BJ (cell line): ENCODE measurements at regions of chr16 and their contacts with region 1.

Region 1: GRCh38 chr16:88785106-88785924 is at the start of gene PIEZO1:
- DNase-seq: no peak
- H3K4me3 ChIP-seq: peak within 1 kb of the TSS; percentile 62
- H3K27me3 ChIP-seq: no peaks in the 10 kb centered on the region
- CTCF ChIP-seq: peak; percentile 83
- polyA plus RNA-seq, gene PIEZO1: 58.1 and 139 TPM in 2 replicates

Region 2: GRCh38 chr16:88754912-88755744 is 30.2 kb before region 1 on chr16:
- CTCF ChIA-PET with region 1: interaction called, 27 read pairs
- POLR2A ChIA-PET with region 1: no interaction called
- DNase-seq: no peak
- H3K4me3 ChIP-seq: no peak overlapping the region
- H3K27me3 ChIP-seq: no peaks in the 10 kb centered on the region
- CTCF ChIP-seq: peak; percentile 63

Region 3: GRCh38 chr16:88770461-88771293 is 14.6 kb before region 1 on chr16:
- CTCF ChIA-PET with region 1: interaction called, 18 read pairs
- POLR2A ChIA-PET with region 1: interaction called, 3 read pairs
- DNase-seq: no peak
- H3K4me3 ChIP-seq: no peak overlapping the region
- H3K27me3 ChIP-seq: no peaks in the 10 kb centered on the region
- CTCF ChIP-seq: no peak

Region 4: GRCh38 chr16:88799569-88800276 is 14.4 kb after region 1 on chr16:
- CTCF ChIA-PET with region 1: interaction called, 19 read pairs
- POLR2A ChIA-PET with region 1: no interaction called
- DNase-seq: no peak
- H3K4me3 ChIP-seq: no peak overlapping the region
- H3K27me3 ChIP-seq: no peaks in the 10 kb centered on the region
- CTCF ChIP-seq: no peak